Activated T-helper 1 cell treated with anti-CD3 and anti-CD28 coated beads, Interleukin-12 subunit alpha, Interleukin-12 subunit beta, Interleukin-2, Interleukin-4 antibody, amounts not matched to agents 30 ng/mL and 10 ng/mL and 1 ng/mL, durations not matched to agents 14 hours and 24 hours and 36 hours (primary cell): ENCODE measurements at regions of chr12 and their contacts with region 1.

Region 1: GRCh38 chr12:53727310-53728041 is at the start of gene CALCOCO1:
- DNase-seq: peak; percentile 96
- H3K4me3 Mint-ChIP-seq: peak within 1 kb of the TSS; percentile 92
- H3K27ac Mint-ChIP-seq: peak within 1 kb of the TSS; percentile 80
- H3K4me1 Mint-ChIP-seq: peaks cover 26% of the 10 kb centered on the region
- H3K27me3 Mint-ChIP-seq: no peaks in the 10 kb centered on the region
- total RNA-seq, gene CALCOCO1: 17.4 and 19.2 TPM in 2 replicates

Region 2: DNA sequence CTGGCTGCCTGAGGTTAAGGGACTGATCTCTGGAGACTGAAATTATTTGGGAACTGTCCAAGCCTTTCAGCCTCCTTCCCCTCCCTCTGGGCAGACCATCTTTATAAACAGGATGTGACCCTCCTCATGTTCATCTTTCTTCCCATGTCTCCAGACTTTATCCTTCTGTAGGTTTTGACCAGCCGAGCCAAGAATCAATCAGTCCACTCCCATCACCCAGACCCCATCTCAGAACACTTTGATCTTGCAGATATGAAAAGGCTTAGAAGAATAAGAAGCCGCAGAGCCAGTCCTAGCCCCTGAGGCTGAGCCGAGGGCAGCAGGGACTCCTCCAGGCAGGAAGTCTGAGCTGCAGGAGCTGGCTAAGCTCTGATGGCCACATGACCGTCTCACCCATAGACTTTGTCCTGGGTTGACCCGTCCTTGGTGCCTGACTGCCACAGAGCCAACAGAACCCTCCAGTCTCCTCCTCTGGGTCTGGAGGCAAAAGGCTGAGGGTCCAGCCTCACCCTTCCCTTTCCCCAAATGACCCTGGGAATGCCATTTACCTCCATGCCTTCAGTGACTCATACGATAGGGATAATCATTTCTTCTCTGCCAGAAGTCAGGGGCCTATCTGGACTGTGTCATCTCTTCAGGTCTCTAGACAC is 1176.1 kb before region 1 on chr12:
- intact Hi-C with region 1: no loop called
- DNase-seq: no peak
- H3K4me3 Mint-ChIP-seq: no peak overlapping the region
- H3K27ac Mint-ChIP-seq: no peak overlapping the region
- H3K4me1 Mint-ChIP-seq: no peaks in the 10 kb centered on the region
- H3K27me3 Mint-ChIP-seq: peaks cover 10% of the 10 kb centered on the region

Region 3: GRCh38 chr12:53500776-53501614 is 226.5 kb before region 1 on chr12 and contains the start of gene TARBP2:
- intact Hi-C with region 1: loop called (anchors 1 kb)
- DNase-seq: peak; percentile 93
- H3K4me3 Mint-ChIP-seq: peak within 1 kb of the TSS; percentile 95
- H3K27ac Mint-ChIP-seq: peak within 1 kb of the TSS; percentile 98
- H3K4me1 Mint-ChIP-seq: peaks cover 53% of the 10 kb centered on the region
- H3K27me3 Mint-ChIP-seq: peaks cover 2% of the 10 kb centered on the region
- total RNA-seq, gene TARBP2: 47.7 and 48.2 TPM in 2 replicates

Region 4: GRCh38 chr12:53645165-53645564 is 82.3 kb before region 1 on chr12:
- intact Hi-C with region 1: no loop called
- DNase-seq: no peak
- H3K4me3 Mint-ChIP-seq: no peak overlapping the region
- H3K27ac Mint-ChIP-seq: no peak overlapping the region
- H3K4me1 Mint-ChIP-seq: no peaks in the 10 kb centered on the region
- H3K27me3 Mint-ChIP-seq: peaks cover 9% of the 10 kb centered on the region

Region 5: GRCh38 chr12:53675651-53676453 is 51.6 kb before region 1 on chr12 and contains the start of gene ATP5MC2:
- intact Hi-C with region 1: loop called (anchors 1 kb)
- DNase-seq: peak; percentile 95
- H3K4me3 Mint-ChIP-seq: peak within 1 kb of the TSS; percentile 87
- H3K27ac Mint-ChIP-seq: peak within 1 kb of the TSS; percentile 95
- H3K4me1 Mint-ChIP-seq: peaks cover 22% of the 10 kb centered on the region
- H3K27me3 Mint-ChIP-seq: peaks cover 27% of the 10 kb centered on the region
- total RNA-seq, gene ATP5MC2: 363 and 383 TPM in 2 replicates

Region 6: GRCh38 chr12:53686436-53686835 is 41.0 kb before region 1 on chr12:
- intact Hi-C with region 1: no loop called
- DNase-seq: no peak
- H3K4me3 Mint-ChIP-seq: no peak overlapping the region
- H3K27ac Mint-ChIP-seq: no peak overlapping the region
- H3K4me1 Mint-ChIP-seq: no peaks in the 10 kb centered on the region
- H3K27me3 Mint-ChIP-seq: peaks cover 23% of the 10 kb centered on the region

Region 7: DNA sequence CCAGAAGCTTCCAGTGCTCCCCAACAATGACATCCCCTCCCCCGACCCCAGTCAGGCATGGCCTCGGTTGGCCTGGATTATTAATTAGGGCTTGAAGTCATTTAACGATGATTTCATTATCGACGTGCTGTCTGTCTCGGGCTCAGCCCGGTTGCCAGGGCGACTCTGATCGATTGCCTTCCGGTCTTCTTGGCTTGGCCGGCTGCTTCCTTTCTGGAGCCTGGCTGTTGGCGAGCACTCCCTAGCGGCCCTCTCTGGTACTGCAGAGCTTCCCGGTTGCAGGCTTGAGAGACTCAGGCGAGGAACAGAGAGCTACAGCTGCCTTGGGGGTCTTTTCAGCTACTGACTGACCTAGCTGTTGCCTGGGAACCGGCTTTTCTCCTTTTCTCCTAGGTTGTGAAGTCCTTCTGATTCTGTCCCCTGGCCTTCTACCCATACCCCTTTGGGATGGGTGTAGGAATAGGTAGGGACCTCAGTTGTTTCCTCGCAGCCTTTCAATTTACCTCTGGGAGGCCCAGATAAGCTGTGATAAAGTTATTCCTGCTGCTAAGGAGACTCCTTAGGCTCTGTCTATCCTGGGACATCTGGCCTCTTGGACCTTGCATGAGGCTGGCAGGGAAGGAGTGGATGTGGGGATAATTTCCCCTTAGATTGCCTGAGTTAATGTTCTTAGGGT is 29.8 kb after region 1 on chr12:
- intact Hi-C with region 1: loop called (anchors 1 kb)
- DNase-seq: peak; percentile 71
- H3K4me3 Mint-ChIP-seq: peak overlapping the region; percentile 43
- H3K27ac Mint-ChIP-seq: peak overlapping the region; percentile 56
- H3K4me1 Mint-ChIP-seq: peaks cover 16% of the 10 kb centered on the region
- H3K27me3 Mint-ChIP-seq: peaks cover 36% of the 10 kb centered on the region

Region 8: GRCh38 chr12:55715833-55716581 is 1988.5 kb after region 1 on chr12 and contains the start of gene BLOC1S1:
- intact Hi-C with region 1: loop called (anchors 2 kb)
- DNase-seq: peak; percentile 90
- H3K4me3 Mint-ChIP-seq: peak within 1 kb of the TSS; percentile 91
- H3K27ac Mint-ChIP-seq: peak within 1 kb of the TSS; percentile 93
- H3K4me1 Mint-ChIP-seq: peaks cover 34% of the 10 kb centered on the region
- H3K27me3 Mint-ChIP-seq: peaks cover 16% of the 10 kb centered on the region
- total RNA-seq, gene BLOC1S1: 62.5 and 64.8 TPM in 2 replicates